AG04449 (cell line): ENCODE measurements at regions of chr6 and their contacts with region 1.

Region 1: DNA sequence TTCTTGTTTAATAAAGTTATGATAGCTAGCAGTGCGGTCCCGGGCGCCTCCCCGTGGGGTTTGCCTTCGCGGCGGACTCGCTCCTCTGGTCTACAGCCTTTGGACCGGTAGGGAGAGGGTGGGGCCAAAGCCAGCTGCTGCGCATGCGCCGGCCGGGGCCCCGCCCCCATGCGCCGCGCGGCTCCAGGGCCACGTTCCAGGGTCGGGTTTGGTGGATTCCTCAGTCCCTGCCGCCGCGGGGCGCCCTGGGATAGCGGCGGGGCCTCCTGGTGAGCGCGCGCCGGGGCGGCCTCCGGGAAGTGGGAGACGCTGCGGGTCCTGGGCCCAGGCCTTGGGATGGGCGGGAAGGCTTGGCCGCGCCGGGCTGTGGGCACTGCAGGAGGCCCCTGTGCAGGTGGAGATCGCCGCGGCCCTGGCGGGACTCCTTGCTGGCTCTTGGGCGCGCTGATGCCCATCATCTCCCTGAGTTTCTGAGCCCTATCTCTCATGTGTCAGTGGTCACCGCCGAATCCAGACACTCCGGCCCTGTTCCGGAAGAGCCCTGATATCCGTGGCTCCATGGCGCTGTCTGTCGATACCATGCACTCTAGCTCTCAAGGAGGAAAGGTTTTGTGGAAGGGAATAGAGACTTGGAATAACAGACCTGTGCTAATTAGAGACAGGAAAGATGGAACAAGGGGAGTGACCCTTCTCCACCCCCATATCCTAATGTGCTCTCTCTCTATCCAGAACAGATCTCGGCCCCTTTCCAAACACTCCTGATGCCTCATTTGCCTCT is at the start of gene VARS2:
- DNase-seq: no peak
- H3K4me3 ChIP-seq: peak within 1 kb of the TSS; percentile 60
- CTCF ChIP-seq: peak; percentile 52

Region 2: GRCh38 chr6:30821862-30822782 is 92.1 kb before region 1 on chr6:
- CTCF ChIA-PET with region 1: interaction called, 258 read pairs
- POLR2A ChIA-PET with region 1: interaction called, 3 read pairs
- DNase-seq: no peak
- H3K4me3 ChIP-seq: no peak overlapping the region
- CTCF ChIP-seq: peak; percentile 33

Region 3: DNA sequence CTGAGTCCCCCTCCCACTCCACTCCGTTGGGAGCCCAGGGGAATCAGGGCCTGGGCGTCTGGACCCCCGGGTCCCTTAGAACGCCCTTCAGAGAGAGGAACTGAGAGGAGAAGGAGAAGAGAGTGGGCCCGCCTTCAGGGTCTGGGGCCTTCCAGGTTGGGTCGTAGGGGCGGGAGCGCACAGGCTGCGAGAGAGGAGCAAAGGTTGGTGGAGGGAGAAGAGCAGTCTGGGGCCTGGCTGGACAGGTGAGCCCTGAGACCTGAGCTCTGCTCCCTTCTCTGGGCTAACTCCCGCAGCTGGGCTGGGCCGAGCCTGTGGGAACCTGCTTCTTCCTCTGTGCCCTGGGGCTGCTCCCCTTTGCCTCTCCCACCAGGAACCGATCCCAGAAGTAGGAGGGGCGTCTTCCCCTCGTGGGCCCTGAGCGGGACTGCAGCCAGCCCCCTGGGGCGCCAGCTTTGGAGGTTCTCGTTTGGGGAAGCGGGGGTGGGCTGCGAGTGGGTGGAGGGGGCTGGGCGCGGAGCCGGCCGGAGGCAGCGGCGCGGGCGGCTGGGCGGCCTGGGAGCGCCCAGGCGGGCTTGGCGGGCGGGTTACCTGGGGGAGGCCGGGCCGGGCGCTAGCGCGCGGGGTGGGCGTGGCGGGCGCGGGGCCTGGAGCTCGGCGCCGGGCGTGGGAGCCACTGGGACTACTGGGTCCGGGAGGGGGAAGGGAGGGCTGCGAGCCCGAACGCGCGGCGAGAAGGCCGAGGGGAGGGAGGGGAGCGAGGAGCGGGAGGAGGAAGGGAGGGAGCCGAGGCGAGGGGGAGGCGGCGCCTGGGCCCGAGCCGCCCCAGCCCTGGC is 30.4 kb before region 1 on chr6 and contains the start of gene DDR1:
- CTCF ChIA-PET with region 1: interaction called, 10 read pairs
- POLR2A ChIA-PET with region 1: interaction called, 3 read pairs
- DNase-seq: no peak
- H3K4me3 ChIP-seq: peak within 1 kb of the TSS; percentile 82
- CTCF ChIP-seq: no peak

Region 4: DNA sequence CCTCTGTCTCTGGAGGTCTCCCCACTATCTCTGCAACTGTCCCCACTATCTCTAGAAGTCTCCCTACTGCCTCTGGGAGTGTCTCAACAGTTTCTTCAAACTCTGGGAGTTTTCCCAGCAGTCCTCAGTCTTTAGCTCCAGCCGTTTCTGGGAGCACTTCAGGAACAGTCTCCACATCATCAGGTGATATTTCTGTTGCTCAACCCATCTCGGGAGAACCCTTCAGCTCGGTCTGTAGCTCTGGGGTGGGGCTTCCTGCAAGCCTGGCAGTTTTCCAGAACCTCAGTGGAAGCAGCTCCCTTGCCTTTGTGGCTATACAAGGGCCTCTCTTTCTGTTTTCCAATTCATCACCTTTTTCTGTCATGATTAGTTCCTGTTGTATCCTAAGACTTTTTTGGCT is 20.8 kb after region 1 on chr6:
- CTCF ChIA-PET with region 1: interaction called, 60 read pairs
- POLR2A ChIA-PET with region 1: no interaction called
- DNase-seq: no peak
- H3K4me3 ChIP-seq: no peak overlapping the region
- CTCF ChIP-seq: no peak

Region 5: GRCh38 chr6:31042806-31043205 is 128.5 kb after region 1 on chr6:
- CTCF ChIA-PET with region 1: interaction called, 59 read pairs
- POLR2A ChIA-PET with region 1: no interaction called
- DNase-seq: no peak
- H3K4me3 ChIP-seq: no peak overlapping the region
- CTCF ChIP-seq: peak; percentile 77

Region 6: DNA sequence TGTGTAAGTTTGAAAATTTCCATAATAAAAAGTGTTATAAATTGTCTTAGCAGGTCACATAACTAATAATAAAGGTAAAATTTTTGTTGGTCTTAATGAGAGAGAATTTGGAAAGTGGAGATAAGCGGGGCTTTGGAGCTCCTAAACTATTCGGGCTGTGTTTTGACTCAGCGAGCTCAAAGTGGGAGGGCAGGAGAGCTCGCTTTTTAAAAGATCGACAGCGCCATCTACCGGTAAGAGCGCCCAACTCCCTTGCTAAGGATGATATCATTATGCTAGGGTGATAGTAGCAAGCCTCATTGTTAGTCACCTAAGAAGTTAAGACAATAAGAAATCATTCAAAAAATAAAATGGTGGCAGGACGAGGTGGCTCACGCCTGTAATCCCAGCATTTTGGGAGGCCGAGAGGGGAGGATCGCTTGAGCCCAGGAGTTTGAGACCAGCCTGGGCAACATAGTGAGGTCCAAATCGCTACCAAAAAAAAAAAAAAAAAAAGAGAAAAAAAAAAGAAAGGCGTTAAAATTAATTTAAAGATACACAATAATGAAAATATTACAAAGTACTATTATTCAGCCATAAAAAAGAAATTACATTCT is 173.3 kb after region 1 on chr6:
- CTCF ChIA-PET with region 1: interaction called, 1,346 read pairs
- POLR2A ChIA-PET with region 1: interaction called, 4 read pairs
- DNase-seq: peak; percentile 23
- H3K4me3 ChIP-seq: no peak overlapping the region
- CTCF ChIP-seq: peak; percentile 77